Activated CD8-positive, alpha-beta T cell treated with anti-CD3 and anti-CD28 coated beads for 36 hours (primary cell): ENCODE measurements at regions of chr1 and their contacts with region 1.

Region 1: DNA sequence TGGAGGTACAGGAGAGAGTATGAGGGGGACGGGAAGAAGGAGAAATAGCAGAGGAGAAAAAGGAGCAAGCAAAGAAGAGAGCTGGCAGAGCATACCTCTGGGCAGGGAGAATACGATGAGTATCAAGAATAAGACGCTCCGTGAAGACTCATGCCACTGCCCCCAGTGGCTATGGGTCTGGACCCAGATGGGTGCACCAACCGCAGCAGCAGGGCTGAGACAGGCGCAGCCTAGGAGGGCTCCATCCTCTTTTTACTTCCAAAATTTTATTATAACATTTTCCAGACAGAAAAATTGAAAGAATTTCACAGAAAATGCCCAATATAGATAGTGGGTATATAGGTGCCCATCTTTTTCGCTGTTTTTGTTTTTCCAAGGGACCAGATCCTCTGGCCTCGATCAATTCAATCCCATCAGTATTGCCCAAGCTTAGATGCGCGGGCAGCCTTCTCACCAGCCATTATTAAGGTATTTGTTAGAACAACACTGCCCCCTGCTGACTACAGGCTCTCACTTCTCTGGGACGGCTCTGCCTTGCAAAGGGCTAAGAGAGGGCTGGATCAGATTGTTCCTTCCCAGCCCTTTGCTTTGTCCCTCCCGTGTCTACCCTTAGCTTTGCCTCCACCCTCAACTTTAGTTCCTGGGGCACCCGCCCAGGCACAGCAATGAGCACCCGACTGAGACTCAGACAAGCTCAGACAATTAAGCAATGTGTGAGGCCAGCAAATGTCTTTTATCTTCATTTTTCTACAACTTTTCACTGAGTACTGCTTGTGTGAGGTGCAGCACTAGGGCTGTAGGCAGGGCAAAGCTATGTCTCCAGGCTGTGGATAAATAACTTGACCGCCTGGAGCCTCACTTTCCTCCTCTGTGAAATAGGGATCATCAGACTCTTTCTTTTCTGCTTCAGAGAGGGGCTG is 17.5 kb upstream of the CAMK1G start:
- DNase-seq: peak; percentile 89
- ATAC-seq: peak; percentile 91
- H3K4me3 Mint-ChIP-seq: no peak overlapping the region
- H3K27ac Mint-ChIP-seq: no peak overlapping the region
- H3K4me1 Mint-ChIP-seq: peaks cover 6% of the 10 kb centered on the region
- H3K27me3 Mint-ChIP-seq: peaks cover 36% of the 10 kb centered on the region
- CTCF ChIP-seq: peak; percentile 82

Region 2: GRCh38 chr1:209207701-209208286 is 358.2 kb before region 1 on chr1:
- CTCF ChIA-PET with region 1: interaction called, 10 read pairs
- POLR2A ChIA-PET with region 1: no interaction called
- intact Hi-C with region 1: loop called (anchors 5 kb)
- DNase-seq: peak; percentile 58
- ATAC-seq: peak; percentile 60
- H3K4me3 Mint-ChIP-seq: no peak overlapping the region
- H3K27ac Mint-ChIP-seq: no peak overlapping the region
- H3K4me1 Mint-ChIP-seq: peaks cover 2% of the 10 kb centered on the region
- H3K27me3 Mint-ChIP-seq: peaks cover 36% of the 10 kb centered on the region
- CTCF ChIP-seq: peak; percentile 55

Region 3: DNA sequence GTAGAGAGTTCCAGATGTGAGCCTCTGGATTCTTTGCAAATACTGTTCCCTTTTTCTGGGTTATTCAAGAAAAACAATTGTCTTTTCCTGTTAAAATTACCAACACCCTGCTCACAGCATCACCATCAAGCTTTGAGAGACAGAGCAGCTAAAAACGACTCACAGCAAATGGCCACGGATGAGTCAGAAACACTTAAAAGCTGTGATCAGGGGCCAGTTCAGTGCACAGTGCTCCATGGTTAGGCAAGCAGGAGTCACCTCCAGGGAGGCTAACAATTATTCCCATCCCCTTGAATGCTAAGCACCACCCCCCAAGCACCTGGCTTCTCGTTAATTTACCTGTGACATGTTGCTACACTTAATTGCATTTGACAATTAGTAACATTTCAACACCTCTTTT is 110.9 kb before region 1 on chr1:
- CTCF ChIA-PET with region 1: no interaction called
- POLR2A ChIA-PET with region 1: no interaction called
- intact Hi-C with region 1: no loop called
- DNase-seq: peak; percentile 3
- ATAC-seq: no peak
- H3K4me3 Mint-ChIP-seq: no peak overlapping the region
- H3K27ac Mint-ChIP-seq: no peak overlapping the region
- H3K4me1 Mint-ChIP-seq: no peaks in the 10 kb centered on the region
- H3K27me3 Mint-ChIP-seq: peaks cover 14% of the 10 kb centered on the region
- CTCF ChIP-seq: no peak

Region 4: GRCh38 chr1:209576798-209577197 is 10.8 kb after region 1 on chr1:
- CTCF ChIA-PET with region 1: interaction called, 51 read pairs
- POLR2A ChIA-PET with region 1: interaction called, 3 read pairs
- intact Hi-C with region 1: no loop called
- DNase-seq: peak; percentile 78
- ATAC-seq: peak; percentile 97
- H3K4me3 Mint-ChIP-seq: no peak overlapping the region
- H3K27ac Mint-ChIP-seq: no peak overlapping the region
- H3K4me1 Mint-ChIP-seq: no peaks in the 10 kb centered on the region
- H3K27me3 Mint-ChIP-seq: peaks cover 3% of the 10 kb centered on the region
- CTCF ChIP-seq: peak; percentile 95

Region 5: DNA sequence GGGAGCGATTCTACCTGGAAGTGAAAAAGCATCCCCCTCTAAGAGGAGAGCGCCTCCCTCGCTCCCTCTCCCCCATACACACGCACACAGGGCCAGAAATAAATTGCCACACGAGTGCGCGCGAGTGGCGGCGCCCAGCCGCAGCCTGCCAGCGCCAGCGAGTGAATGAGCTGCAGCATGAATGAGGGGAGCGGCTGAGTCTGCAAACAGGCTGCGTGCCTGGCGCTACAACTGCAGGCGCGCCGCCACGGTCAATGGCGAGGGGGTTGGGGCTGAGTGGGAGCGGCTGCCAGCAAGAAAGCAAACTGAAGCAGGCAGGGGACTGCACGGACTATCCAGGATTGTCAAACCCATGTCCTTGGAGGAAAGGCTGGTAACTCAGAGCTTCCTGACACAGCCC is 19.7 kb after region 1 on chr1:
- CTCF ChIA-PET with region 1: interaction called, 51 read pairs
- POLR2A ChIA-PET with region 1: no interaction called
- intact Hi-C with region 1: no loop called
- DNase-seq: peak; percentile 17
- ATAC-seq: peak; percentile 39
- H3K4me3 Mint-ChIP-seq: no peak overlapping the region
- H3K27ac Mint-ChIP-seq: no peak overlapping the region
- H3K4me1 Mint-ChIP-seq: no peaks in the 10 kb centered on the region
- H3K27me3 Mint-ChIP-seq: peaks cover 7% of the 10 kb centered on the region
- CTCF ChIP-seq: no peak

Region 6: DNA sequence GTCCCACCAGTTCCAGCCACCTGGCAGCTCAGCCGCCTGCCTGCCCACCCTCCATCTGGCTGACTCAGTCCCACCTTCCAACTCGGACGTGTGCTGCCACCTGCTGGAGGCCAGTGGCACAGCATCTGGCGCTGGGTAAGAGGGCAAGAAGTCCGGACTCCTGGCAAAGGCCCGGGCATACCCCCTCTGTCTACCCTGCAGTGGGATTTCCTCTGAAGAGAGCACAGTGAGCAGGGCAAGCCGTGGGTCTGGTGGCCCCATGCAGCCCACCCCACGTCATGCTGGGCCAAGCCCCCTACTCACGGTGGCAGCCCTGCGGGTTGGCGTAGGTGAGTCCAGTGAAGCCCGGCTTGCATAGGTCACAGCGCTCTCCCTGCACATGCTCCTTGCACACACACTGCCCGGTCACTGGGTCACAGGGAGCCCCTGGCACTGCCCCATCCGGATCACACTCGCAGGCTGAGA is 61.7 kb after region 1 on chr1:
- CTCF ChIA-PET with region 1: interaction called, 16 read pairs
- POLR2A ChIA-PET with region 1: no interaction called
- intact Hi-C with region 1: no loop called
- DNase-seq: peak; percentile 88
- ATAC-seq: peak; percentile 98
- H3K4me3 Mint-ChIP-seq: no peak overlapping the region
- H3K27ac Mint-ChIP-seq: no peak overlapping the region
- H3K4me1 Mint-ChIP-seq: no peaks in the 10 kb centered on the region
- H3K27me3 Mint-ChIP-seq: peaks cover 2% of the 10 kb centered on the region
- CTCF ChIP-seq: peak; percentile 96

Region 7: DNA sequence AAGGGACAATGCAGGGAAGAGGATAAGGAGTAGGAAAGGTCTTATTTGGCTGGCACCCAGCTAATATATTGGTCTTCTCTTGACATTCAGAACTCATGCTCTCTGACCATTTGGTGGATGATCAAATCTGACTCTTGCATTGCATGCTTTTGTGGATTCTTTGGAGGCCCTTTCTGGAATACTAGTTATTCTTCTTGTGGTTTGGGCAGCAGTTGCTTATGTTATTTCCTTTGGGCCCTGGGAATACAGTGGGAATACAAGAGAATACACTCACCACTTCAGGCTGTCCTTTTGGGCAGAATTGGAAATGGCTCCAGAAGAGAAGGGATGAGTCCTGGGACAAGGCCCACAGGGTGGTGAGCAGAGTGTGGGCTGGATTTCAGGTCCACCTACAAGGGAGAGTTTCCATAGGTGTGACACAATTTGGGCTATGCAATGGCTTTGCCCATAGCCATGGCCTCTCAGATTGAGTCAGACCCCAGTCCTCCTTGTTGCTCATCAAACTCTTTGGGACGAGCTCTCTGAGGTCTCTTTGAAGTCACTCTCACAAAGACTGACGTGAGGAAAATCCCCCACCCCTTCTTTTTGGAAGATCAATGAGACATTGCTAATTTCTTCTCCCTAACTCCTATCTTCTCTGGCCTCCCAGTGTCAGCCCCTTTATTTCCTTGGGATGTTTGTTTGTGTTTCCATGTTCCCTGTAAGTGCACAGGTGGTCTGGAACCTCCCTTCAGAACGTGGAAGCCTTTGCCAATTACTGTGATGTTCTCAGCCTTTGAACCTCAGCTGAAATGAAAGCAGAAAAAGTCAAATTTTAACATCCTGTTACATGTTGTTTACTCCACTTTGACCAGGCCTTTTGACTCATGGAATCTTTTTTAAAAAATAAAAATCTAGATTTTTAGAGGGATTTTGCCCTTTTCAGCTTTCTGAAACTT is 158.0 kb after region 1 on chr1:
- CTCF ChIA-PET with region 1: interaction called, 11 read pairs
- POLR2A ChIA-PET with region 1: no interaction called
- intact Hi-C with region 1: no loop called
- DNase-seq: peak; percentile 66
- ATAC-seq: peak; percentile 84
- H3K4me3 Mint-ChIP-seq: peak overlapping the region; percentile 26
- H3K27ac Mint-ChIP-seq: peak overlapping the region; percentile 97
- H3K4me1 Mint-ChIP-seq: peaks cover 49% of the 10 kb centered on the region
- H3K27me3 Mint-ChIP-seq: no peaks in the 10 kb centered on the region
- CTCF ChIP-seq: no peak

Region 8: DNA sequence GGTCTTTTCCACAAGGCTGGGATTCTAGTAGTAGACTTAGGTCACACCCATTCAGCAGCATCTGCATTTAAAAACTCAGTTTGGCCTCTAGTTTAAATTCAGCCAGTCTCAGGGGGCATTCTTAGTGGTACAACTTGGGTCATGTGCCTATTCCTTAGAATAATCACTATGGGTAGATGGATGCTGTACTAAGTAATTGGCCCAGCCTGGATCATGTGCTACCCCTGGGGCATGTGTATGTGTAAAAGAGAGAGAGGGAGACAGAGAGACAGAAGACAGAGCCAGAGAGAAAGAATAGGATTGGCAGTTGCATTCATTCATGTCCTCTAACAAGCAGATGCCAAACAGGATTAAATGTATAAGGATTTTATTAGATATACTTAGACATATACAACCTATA is 358.4 kb after region 1 on chr1:
- CTCF ChIA-PET with region 1: no interaction called
- POLR2A ChIA-PET with region 1: no interaction called
- intact Hi-C with region 1: no loop called
- DNase-seq: no peak
- ATAC-seq: no peak
- H3K4me3 Mint-ChIP-seq: no peak overlapping the region
- H3K27ac Mint-ChIP-seq: no peak overlapping the region
- H3K4me1 Mint-ChIP-seq: no peaks in the 10 kb centered on the region
- H3K27me3 Mint-ChIP-seq: peaks cover 6% of the 10 kb centered on the region
- CTCF ChIP-seq: no peak